ENCODE measurements at regions of chr9 and their contacts with region 1.

Region 1: DNA sequence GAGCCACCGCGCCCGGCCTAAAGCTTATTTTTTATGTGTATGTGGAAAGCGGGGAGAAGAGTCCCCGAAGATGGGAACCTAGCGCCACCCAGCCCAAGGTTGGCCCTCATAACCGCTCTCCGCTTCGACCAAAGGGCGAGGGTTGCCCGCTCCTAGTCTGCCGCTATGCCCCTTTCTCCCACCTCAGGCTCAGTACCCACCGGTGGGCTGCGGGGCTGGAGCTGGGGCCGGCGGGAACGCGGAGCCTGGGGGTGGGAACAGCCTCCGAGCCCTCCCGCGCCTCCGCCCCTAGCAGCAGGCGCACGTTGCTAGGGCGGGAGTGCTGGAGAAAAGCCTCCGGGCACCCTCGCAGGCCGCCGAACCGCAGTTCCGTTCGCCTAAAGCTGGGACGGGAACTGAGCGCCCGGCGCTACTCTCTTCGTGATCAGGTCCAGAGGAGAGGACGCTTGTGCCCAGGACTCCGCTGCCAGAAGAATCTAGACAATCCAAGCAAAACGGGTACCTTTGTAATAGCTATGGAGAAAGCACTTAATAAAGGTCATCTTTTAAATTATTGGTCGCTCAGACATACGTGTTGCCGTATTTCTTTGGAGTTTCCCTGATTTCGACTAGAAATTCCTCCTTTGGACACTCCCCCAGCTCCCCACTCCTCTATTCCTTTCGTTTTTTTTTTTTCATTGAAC is at the start of gene WDR31:
- DNase-seq: peak; percentile 83 to 98 (median 89)

Region 2: DNA sequence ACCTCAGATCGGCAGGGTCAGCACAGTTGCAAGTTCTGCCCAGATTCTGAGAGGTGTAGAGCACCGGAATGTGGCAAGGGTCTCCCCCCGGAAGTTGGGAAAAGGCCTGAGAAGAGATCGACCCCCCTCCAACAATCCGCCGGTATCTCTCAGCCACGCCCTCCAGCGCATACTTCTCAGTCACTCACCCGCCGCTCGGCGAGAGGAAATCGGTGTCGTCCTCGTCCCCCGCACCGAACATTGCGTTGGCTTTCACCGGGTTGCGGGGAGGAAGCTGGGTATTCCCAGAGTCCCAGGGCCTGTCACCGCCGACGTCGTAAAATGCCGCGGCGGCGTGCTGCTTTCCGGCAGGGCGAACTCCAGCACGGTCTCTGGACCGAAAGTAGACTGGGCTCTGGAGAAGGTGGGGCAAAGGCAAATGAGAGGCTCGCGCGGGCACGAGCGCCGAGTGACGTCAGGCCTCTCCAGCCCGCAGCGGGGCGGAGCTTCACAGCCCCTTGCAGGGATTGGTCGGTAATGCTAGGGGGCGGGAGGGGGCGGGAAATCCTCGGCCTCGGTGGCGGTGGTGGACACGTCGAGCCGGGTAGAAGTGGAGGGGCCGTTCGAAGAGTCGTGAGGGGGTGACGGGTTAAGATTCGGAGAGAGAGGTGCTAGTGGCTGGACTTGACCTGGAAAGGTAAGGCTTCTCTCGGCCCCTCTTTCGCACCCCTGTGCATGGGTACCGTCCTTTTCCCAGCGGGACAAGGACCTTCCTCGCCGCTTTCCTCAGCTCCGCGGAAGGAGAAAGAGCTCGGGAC is 119.0 kb before region 1 on chr9 and contains the starts of genes FKBP15 and SLC31A1:
- intact Hi-C with region 1: no loop called
- DNase-seq: peak; percentile 98 to 100 (median 99)

Region 3: GRCh38 chr9:113376634-113377567 is 36.7 kb after region 1 on chr9 and contains the start of gene HDHD3:
- intact Hi-C with region 1: loop called (anchors 5 kb)
- DNase-seq: peak; percentile 40 to 97 (median 72)

Region 4: GRCh38 chr9:113401027-113401792 is 61.1 kb after region 1 on chr9 and contains the start of gene ALAD:
- intact Hi-C with region 1: loop called (anchors 2 kb)
- DNase-seq: peak; percentile 98 to 100 (median 100)

Region 5: GRCh38 chr9:113410207-113410864 is 70.2 kb after region 1 on chr9 and contains the starts of genes C9orf43 and POLE3:
- intact Hi-C with region 1: loop called (anchors 1 kb)
- DNase-seq: peak; percentile 88 to 99 (median 92)

Region 6: DNA sequence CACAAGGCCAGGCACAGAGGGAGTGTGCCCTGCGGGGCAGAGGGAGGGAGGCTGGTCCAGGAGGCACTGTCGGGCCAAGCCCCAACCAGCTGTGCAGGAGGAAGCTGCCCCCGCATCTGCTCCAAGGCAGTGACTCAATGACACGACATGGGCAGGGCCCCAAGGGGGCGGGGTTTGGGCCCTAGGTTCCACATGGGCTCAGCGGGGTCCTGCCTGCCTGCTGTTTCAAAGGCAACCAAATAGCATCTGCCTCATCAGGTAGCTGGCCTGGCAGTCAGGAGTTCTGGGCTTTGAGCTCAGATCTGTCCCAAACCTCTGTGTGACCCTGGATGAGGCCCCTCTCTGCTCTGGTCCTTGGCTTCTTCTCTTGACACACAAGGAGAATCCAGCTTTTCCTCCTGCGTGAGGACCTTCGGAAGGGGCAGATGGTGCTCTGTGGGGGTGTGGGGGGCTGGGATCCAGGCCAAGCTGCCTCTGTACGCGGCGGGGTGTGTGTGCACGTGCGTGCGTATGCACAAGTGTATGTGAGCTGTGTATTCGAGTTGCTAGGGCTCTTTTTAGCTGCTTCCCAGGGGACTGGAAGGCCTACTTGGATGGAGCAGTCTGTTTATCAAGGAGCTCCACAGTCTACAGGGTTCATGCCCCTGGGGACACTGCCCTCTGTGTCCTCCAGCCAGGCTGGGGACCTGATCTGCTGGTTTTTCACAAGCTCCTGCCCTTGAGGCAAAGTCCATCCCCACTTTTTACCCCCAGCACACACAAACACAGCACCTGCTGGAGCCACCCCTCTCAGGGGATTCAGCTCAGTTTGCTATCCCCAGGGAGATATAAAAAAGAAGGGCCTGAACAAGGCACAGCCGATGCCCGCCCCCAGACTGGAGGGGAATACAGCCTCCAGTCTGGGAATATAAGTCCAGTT is 262.2 kb after region 1 on chr9:
- intact Hi-C with region 1: no loop called
- DNase-seq: peak in 3 of 10 donors; percentile 63 to 78 (median 69)

Measured in posterior cingulate gyrus (tissue), 11 donors.